Naive thymus-derived CD4-positive, alpha-beta T cell (primary cell): ENCODE measurements at regions of chr1 and their contacts with region 1.

Region 1: GRCh38 chr1:147084273-147085096 is 87.8 kb downstream of the PRKAB2 start:
- DNase-seq: peak; percentile 18 to 83 (median 59)
- ATAC-seq: peak; percentile 80
- H3K4me3 ChIP-seq: peak overlapping the region; percentile 76
- H3K4me3 Mint-ChIP-seq: peak overlapping the region; percentile 81 to 99 (median 96)
- H3K27ac ChIP-seq: peak overlapping the region; percentile 73
- H3K27ac Mint-ChIP-seq: peak overlapping the region; percentile 9 to 100 (median 98)
- H3K4me1 ChIP-seq: peaks cover 3 to 20% of the 10 kb centered on the region in 2 donors
- H3K4me1 Mint-ChIP-seq: peaks cover 14 to 51% (median 37%) of the 10 kb centered on the region in 7 donors
- H3K27me3 ChIP-seq: peaks cover 0 to 12% of the 10 kb centered on the region in 2 donors
- H3K27me3 Mint-ChIP-seq: peaks cover 53 to 90% (median 80%) of the 10 kb centered on the region in 5 donors

Region 2: GRCh38 chr1:147039916-147040315 is 44.6 kb before region 1 on chr1:
- CTCF ChIA-PET with region 1: no interaction called
- POLR2A ChIA-PET with region 1: interaction called, 3 read pairs
- intact Hi-C with region 1: loop called in 1 of 2 experiments (anchors 2 kb)
- DNase-seq: no peak
- ATAC-seq: no peak
- H3K4me3 ChIP-seq: no peak overlapping the region
- H3K4me3 Mint-ChIP-seq: peak overlapping the region in 1 of 10 donors; percentile 6
- H3K27ac ChIP-seq: no peak overlapping the region
- H3K27ac Mint-ChIP-seq: peak overlapping the region in 1 of 9 donors; percentile 1
- H3K4me1 ChIP-seq: peaks cover 0 to 3% of the 10 kb centered on the region in 2 donors
- H3K4me1 Mint-ChIP-seq: peaks cover 0 to 56% (median 11%) of the 10 kb centered on the region in 7 donors
- H3K27me3 ChIP-seq: no peaks in the 10 kb centered on the region
- H3K27me3 Mint-ChIP-seq: peaks cover 3 to 40% (median 8%) of the 10 kb centered on the region in 5 donors

Region 3: DNA sequence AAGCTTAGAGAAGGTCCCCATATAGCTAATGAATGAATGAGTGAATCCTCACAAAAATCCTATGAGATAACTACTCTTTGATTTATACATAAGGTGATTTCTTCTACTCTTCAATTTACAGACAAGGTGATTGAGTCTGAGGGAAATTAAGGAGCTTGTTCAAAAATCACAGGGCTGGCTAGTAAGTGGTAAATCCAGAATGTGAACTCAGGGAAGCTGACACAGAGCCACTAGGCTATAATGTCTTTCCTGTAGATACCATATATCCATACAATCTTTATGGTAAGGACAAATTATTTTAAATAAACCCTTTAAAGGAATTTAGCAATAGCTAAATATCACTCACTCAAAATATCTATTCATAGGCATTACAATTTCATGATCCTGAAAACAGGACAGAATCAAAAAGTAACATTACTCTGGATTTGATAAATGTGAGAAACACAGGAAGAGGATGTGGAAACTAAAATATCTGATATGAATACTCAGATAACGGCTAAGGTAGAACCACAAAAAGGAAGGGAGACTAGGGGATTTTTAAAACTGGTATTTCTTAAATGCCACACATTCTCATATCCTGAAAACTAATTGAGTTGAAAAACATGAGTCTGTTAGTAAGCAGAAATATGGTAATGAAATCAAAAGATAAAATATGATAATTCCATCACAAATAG is 38.2 kb before region 1 on chr1:
- CTCF ChIA-PET with region 1: no interaction called
- POLR2A ChIA-PET with region 1: interaction called, 3 read pairs
- intact Hi-C with region 1: loop called in 1 of 2 experiments (anchors 2 kb)
- DNase-seq: peak in 1 of 9 donors; percentile 2
- ATAC-seq: no peak
- H3K4me3 ChIP-seq: no peak overlapping the region
- H3K4me3 Mint-ChIP-seq: peak overlapping the region in 7 of 10 donors; percentile 63 to 80 (median 70)
- H3K27ac ChIP-seq: no peak overlapping the region
- H3K27ac Mint-ChIP-seq: peak overlapping the region in 7 of 9 donors; percentile 10 to 90 (median 79)
- H3K4me1 ChIP-seq: peaks cover 0 to 7% of the 10 kb centered on the region in 2 donors
- H3K4me1 Mint-ChIP-seq: peaks cover 12 to 67% (median 40%) of the 10 kb centered on the region in 7 donors
- H3K27me3 ChIP-seq: no peaks in the 10 kb centered on the region
- H3K27me3 Mint-ChIP-seq: peaks cover 0 to 12% (median 1%) of the 10 kb centered on the region in 5 donors

Region 4: GRCh38 chr1:147072370-147073061 is 12.0 kb before region 1 on chr1:
- CTCF ChIA-PET with region 1: no interaction called
- POLR2A ChIA-PET with region 1: interaction called, 6 read pairs
- intact Hi-C with region 1: loop called in 1 of 2 experiments (anchors 1 kb)
- DNase-seq: peak in 3 of 9 donors; percentile 17 to 22 (median 18)
- ATAC-seq: no peak
- H3K4me3 ChIP-seq: peak overlapping the region; percentile 14
- H3K4me3 Mint-ChIP-seq: peak overlapping the region; percentile 21 to 90 (median 85)
- H3K27ac ChIP-seq: no peak overlapping the region
- H3K27ac Mint-ChIP-seq: peak overlapping the region in 3 of 9 donors; percentile 9 to 71 (median 26)
- H3K4me1 ChIP-seq: no peaks in the 10 kb centered on the region
- H3K4me1 Mint-ChIP-seq: peaks cover 4 to 39% (median 18%) of the 10 kb centered on the region in 7 donors
- H3K27me3 ChIP-seq: no peaks in the 10 kb centered on the region
- H3K27me3 Mint-ChIP-seq: peaks cover 51 to 78% (median 70%) of the 10 kb centered on the region in 5 donors

Region 5: DNA sequence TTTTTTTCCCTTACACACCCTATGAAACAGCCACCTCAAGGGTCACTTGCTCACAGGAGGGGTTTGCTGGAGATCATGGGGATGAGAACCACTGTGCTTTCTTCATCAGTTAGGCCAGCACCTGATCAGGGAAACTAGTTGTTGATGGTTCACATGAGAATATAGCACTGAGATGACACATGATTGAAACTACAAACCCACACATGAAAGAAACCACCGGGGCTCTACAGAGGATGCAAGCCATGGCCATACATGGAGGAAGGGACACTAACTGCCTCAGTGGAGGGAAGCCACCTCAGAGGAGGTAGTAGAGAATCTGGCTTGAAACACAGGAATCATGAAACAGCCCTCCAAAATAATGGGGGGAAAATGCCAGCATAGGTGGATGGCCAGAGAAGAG is 24.6 kb after region 1 on chr1:
- CTCF ChIA-PET with region 1: no interaction called
- POLR2A ChIA-PET with region 1: no interaction called
- intact Hi-C with region 1: no loop called
- DNase-seq: no peak
- ATAC-seq: no peak
- H3K4me3 ChIP-seq: no peak overlapping the region
- H3K4me3 Mint-ChIP-seq: no peak overlapping the region
- H3K27ac ChIP-seq: no peak overlapping the region
- H3K27ac Mint-ChIP-seq: no peak overlapping the region
- H3K4me1 ChIP-seq: no peaks in the 10 kb centered on the region
- H3K4me1 Mint-ChIP-seq: no peaks in the 10 kb centered on the region
- H3K27me3 ChIP-seq: no peaks in the 10 kb centered on the region
- H3K27me3 Mint-ChIP-seq: peaks cover 13 to 25% (median 20%) of the 10 kb centered on the region in 5 donors

Region 6: GRCh38 chr1:147124266-147124665 is 39.8 kb after region 1 on chr1:
- CTCF ChIA-PET with region 1: no interaction called
- POLR2A ChIA-PET with region 1: no interaction called
- intact Hi-C with region 1: no loop called
- DNase-seq: no peak
- ATAC-seq: no peak
- H3K4me3 ChIP-seq: no peak overlapping the region
- H3K4me3 Mint-ChIP-seq: no peak overlapping the region
- H3K27ac ChIP-seq: no peak overlapping the region
- H3K27ac Mint-ChIP-seq: no peak overlapping the region
- H3K4me1 ChIP-seq: no peaks in the 10 kb centered on the region
- H3K4me1 Mint-ChIP-seq: no peaks in the 10 kb centered on the region
- H3K27me3 ChIP-seq: no peaks in the 10 kb centered on the region
- H3K27me3 Mint-ChIP-seq: peaks cover 12 to 31% (median 20%) of the 10 kb centered on the region in 5 donors

Region 7: GRCh38 chr1:147172168-147172992 is 87.9 kb after region 1 on chr1 and contains the start of gene PRKAB2:
- CTCF ChIA-PET with region 1: no interaction called
- POLR2A ChIA-PET with region 1: interaction called, 7 read pairs
- intact Hi-C with region 1: loop called in 1 of 2 experiments (anchors 1 kb)
- DNase-seq: peak; percentile 67 to 95 (median 86)
- ATAC-seq: peak; percentile 93
- H3K4me3 ChIP-seq: peak within 1 kb of the TSS; percentile 91
- H3K4me3 Mint-ChIP-seq: peak within 1 kb of the TSS; percentile 82 to 99 (median 98)
- H3K27ac ChIP-seq: peak within 1 kb of the TSS; percentile 76
- H3K27ac Mint-ChIP-seq: peak within 1 kb of the TSS; percentile 66 to 96 (median 95)
- H3K4me1 ChIP-seq: peaks cover 15% of the 10 kb centered on the region in 2 donors
- H3K4me1 Mint-ChIP-seq: peaks cover 19 to 55% (median 41%) of the 10 kb centered on the region in 7 donors
- H3K27me3 ChIP-seq: no peaks in the 10 kb centered on the region
- H3K27me3 Mint-ChIP-seq: peaks cover 0 to 10% (median 0%) of the 10 kb centered on the region in 5 donors
- total RNA-seq, gene PRKAB2: 8.1 to 26.9 (median 11.4) TPM

Region 8: DNA sequence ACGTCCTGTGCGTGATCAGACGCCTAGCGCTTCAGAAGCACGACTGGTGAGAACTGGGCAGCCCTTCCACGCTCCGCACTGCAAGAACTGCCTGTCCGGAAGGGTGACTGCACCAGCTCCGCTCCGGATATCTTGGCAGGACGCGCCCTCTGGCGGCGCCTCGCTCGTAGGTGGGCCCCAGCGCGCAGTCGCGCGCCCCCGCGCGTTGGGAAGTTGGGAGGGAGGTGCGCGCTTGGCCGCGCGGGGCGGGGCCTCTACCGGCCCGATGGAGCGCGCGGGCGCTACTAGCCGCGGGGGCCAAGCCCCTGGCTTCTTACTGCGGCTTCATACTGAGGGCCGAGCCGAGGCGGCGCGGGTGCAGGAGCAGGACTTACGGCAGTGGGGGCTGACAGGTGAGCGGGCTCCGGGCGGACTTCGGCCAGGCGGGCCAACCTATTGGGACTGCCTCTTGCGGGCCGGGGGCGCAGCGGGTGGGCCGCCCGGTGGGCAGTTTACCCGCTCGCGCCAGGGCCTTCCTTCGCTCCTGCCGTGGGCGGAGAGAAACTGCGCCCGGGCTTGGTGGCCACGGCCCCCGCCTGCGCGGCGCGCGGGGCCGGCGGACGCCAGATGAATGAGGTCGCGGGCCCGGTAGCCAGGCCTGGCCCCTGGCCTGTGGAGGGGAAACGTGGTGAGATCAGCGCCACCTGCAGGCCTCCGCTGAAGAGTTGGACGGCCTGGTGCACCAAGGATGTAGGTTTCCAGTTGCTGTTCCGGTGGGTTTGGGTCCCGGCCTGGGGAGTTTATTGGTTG is 158.1 kb after region 1 on chr1 and contains the start of gene CHD1L:
- CTCF ChIA-PET with region 1: no interaction called
- POLR2A ChIA-PET with region 1: interaction called, 4 read pairs
- intact Hi-C with region 1: loop called (anchors 1 to 10 kb)
- DNase-seq: peak; percentile 84 to 94 (median 92)
- ATAC-seq: peak; percentile 97
- H3K4me3 ChIP-seq: peak within 1 kb of the TSS; percentile 90
- H3K4me3 Mint-ChIP-seq: peak within 1 kb of the TSS; percentile 89 to 98 (median 95)
- H3K27ac ChIP-seq: peak within 1 kb of the TSS; percentile 78
- H3K27ac Mint-ChIP-seq: peak within 1 kb of the TSS; percentile 32 to 89 (median 70)
- H3K4me1 ChIP-seq: peaks cover 7 to 16% of the 10 kb centered on the region in 2 donors
- H3K4me1 Mint-ChIP-seq: peaks cover 24 to 46% (median 42%) of the 10 kb centered on the region in 7 donors
- H3K27me3 ChIP-seq: no peaks in the 10 kb centered on the region
- H3K27me3 Mint-ChIP-seq: peaks cover 0 to 9% (median 0%) of the 10 kb centered on the region in 5 donors
- total RNA-seq, gene CHD1L: 26.4 to 53.9 (median 32.3) TPM

Region 9: GRCh38 chr1:147273409-147274336 is 189.2 kb after region 1 on chr1:
- CTCF ChIA-PET with region 1: no interaction called
- POLR2A ChIA-PET with region 1: no interaction called
- intact Hi-C with region 1: no loop called
- DNase-seq: peak in 7 of 9 donors; percentile 12 to 57 (median 42)
- ATAC-seq: peak; percentile 65
- H3K4me3 ChIP-seq: no peak overlapping the region
- H3K4me3 Mint-ChIP-seq: no peak overlapping the region
- H3K27ac ChIP-seq: no peak overlapping the region
- H3K27ac Mint-ChIP-seq: no peak overlapping the region
- H3K4me1 ChIP-seq: no peaks in the 10 kb centered on the region
- H3K4me1 Mint-ChIP-seq: peaks cover 0 to 6% (median 4%) of the 10 kb centered on the region in 7 donors
- H3K27me3 ChIP-seq: no peaks in the 10 kb centered on the region
- H3K27me3 Mint-ChIP-seq: no peaks in the 10 kb centered on the region

Region 10: GRCh38 chr1:148318123-148318903 is 1233.8 kb after region 1 on chr1:
- CTCF ChIA-PET with region 1: no interaction called
- POLR2A ChIA-PET with region 1: no interaction called
- intact Hi-C with region 1: loop called in 1 of 2 experiments (anchors 10 kb)
- DNase-seq: peak in 8 of 9 donors; percentile 24 to 67 (median 48)
- ATAC-seq: peak; percentile 87
- H3K4me3 ChIP-seq: peak overlapping the region; percentile 67
- H3K4me3 Mint-ChIP-seq: peak overlapping the region; percentile 86 to 98 (median 94)
- H3K27ac ChIP-seq: peak overlapping the region; percentile 9
- H3K27ac Mint-ChIP-seq: peak overlapping the region; percentile 41 to 87 (median 66)
- H3K4me1 ChIP-seq: peaks cover 10 to 16% of the 10 kb centered on the region in 2 donors
- H3K4me1 Mint-ChIP-seq: peaks cover 16 to 42% (median 27%) of the 10 kb centered on the region in 7 donors
- H3K27me3 ChIP-seq: no peaks in the 10 kb centered on the region
- H3K27me3 Mint-ChIP-seq: peaks cover 0 to 56% (median 10%) of the 10 kb centered on the region in 5 donors

Region 11: GRCh38 chr1:148334339-148335130 is 1250.0 kb after region 1 on chr1:
- CTCF ChIA-PET with region 1: no interaction called
- POLR2A ChIA-PET with region 1: no interaction called
- intact Hi-C with region 1: no loop called
- DNase-seq: peak; percentile 40 to 74 (median 65)
- ATAC-seq: peak; percentile 84
- H3K4me3 ChIP-seq: peak overlapping the region; percentile 86
- H3K4me3 Mint-ChIP-seq: peak overlapping the region; percentile 84 to 99 (median 96)
- H3K27ac ChIP-seq: peak overlapping the region; percentile 78
- H3K27ac Mint-ChIP-seq: peak overlapping the region; percentile 89 to 99 (median 97)
- H3K4me1 ChIP-seq: peaks cover 5 to 12% of the 10 kb centered on the region in 2 donors
- H3K4me1 Mint-ChIP-seq: peaks cover 24 to 42% (median 34%) of the 10 kb centered on the region in 7 donors
- H3K27me3 ChIP-seq: no peaks in the 10 kb centered on the region
- H3K27me3 Mint-ChIP-seq: peaks cover 3 to 68% (median 14%) of the 10 kb centered on the region in 5 donors